Mammary epithelial cell (primary cell): ENCODE measurements at regions of chr6 and their contacts with region 1.

Region 1: GRCh38 chr6:73854998-73855718 is 159.2 kb downstream of the CD109 start:
- DNase-seq: peak; percentile 41
- H3K4me3 ChIP-seq: no peak overlapping the region
- H3K27ac ChIP-seq: no peak overlapping the region
- H3K4me1 ChIP-seq: no peaks in the 10 kb centered on the region
- H3K27me3 ChIP-seq: no peaks in the 10 kb centered on the region
- CTCF ChIP-seq: peak; percentile 67 to 69

Region 2: GRCh38 chr6:73739096-73739495 is 116.1 kb before region 1 on chr6:
- CTCF ChIA-PET with region 1: no interaction called
- dilution Hi-C with region 1: no loop called
- in situ Hi-C with region 1: no loop called
- intact Hi-C with region 1: loop called (anchors 1 kb)
- DNase-seq: peak; percentile 23
- H3K4me3 ChIP-seq: no peak overlapping the region
- H3K27ac ChIP-seq: no peak overlapping the region
- H3K4me1 ChIP-seq: no peaks in the 10 kb centered on the region
- H3K27me3 ChIP-seq: no peaks in the 10 kb centered on the region
- CTCF ChIP-seq: peak; percentile 58 to 62

Region 3: DNA sequence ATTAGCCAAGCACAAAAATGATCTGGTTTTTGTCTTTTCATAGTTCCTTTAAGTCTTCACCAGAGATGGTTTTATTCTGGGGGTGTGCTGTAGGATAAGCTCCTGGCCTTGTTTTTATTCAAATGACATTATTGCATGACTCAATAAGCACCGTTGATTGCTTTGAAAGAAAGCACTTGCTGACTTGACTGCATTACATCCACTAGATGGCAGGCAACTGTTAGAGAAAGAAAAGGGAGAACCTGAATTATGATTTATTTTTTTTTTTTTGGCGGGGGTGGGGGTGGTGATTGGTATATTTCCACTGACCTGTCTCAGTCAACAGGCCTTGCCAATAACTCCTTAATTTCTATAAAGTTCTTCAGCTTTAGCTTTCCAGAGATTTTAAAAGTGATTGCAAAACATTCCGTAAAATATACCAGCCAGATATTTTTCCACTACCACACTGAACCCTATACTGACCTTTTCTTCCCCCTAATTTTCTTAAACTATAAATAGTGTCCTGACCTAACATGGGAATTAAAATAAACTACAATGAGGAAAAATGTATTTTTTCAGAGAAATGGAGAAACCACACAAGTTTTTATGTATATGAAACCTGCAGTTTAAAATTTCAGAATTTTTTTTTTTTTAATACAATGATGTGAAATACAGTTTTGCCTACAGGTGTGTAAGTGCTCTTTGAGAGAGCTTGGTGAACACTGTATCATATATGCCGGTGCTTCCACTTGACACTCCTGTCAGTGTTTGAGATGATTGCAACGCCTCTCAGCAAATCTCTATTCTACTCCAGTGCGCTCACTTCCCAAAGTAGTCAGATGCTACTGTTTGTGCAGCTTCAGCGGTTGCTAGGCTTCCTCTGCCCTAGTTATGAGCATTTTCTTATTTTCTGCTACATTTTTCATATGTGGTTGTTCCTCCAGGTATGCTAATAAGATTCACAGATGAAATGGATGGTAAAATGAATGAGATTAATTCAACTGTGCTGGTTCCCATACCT is 115.1 kb after region 1 on chr6:
- CTCF ChIA-PET with region 1: no interaction called
- dilution Hi-C with region 1: no loop called
- in situ Hi-C with region 1: no loop called
- intact Hi-C with region 1: loop called (anchors 1 kb)
- DNase-seq: peak; percentile 54
- H3K4me3 ChIP-seq: no peak overlapping the region
- H3K27ac ChIP-seq: no peak overlapping the region
- H3K4me1 ChIP-seq: no peaks in the 10 kb centered on the region
- H3K27me3 ChIP-seq: no peaks in the 10 kb centered on the region
- CTCF ChIP-seq: peak; percentile 80 to 82

Region 4: GRCh38 chr6:74091136-74091793 is 236.1 kb after region 1 on chr6:
- CTCF ChIA-PET with region 1: no interaction called
- dilution Hi-C with region 1: no loop called
- in situ Hi-C with region 1: no loop called
- intact Hi-C with region 1: loop called (anchors 1 kb)
- DNase-seq: peak; percentile 20
- H3K4me3 ChIP-seq: no peak overlapping the region
- H3K27ac ChIP-seq: no peak overlapping the region
- H3K4me1 ChIP-seq: no peaks in the 10 kb centered on the region
- H3K27me3 ChIP-seq: no peaks in the 10 kb centered on the region
- CTCF ChIP-seq: peak; percentile 70 to 73

Region 5: DNA sequence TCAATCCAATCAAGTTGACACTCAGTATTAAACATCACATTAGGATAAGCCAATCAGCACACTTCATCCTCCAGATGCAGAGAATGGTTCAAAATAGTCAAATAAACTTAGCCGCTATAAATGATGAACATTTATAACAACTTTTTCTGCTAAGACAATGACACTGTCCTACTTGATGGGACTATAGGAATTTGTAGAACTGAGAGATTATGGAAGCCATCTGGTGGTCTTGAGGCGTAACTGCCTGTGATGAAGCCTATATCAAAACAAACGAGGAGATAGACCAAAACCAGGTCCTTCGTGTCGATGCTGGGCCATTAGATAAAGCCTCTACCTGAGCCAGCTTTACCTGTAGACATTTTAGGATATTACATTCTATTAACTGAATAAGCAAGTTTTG is 719.6 kb after region 1 on chr6:
- CTCF ChIA-PET with region 1: no interaction called
- dilution Hi-C with region 1: no loop called
- in situ Hi-C with region 1: no loop called
- intact Hi-C with region 1: loop called (anchors 10 kb)
- DNase-seq: no peak
- H3K4me3 ChIP-seq: no peak overlapping the region
- H3K27ac ChIP-seq: no peak overlapping the region
- H3K4me1 ChIP-seq: no peaks in the 10 kb centered on the region
- H3K27me3 ChIP-seq: no peaks in the 10 kb centered on the region
- CTCF ChIP-seq: peak; percentile 29 to 34